Mammary epithelial cell (primary cell): ENCODE measurements at regions of chr19 and their contacts with region 1.

Region 1: DNA sequence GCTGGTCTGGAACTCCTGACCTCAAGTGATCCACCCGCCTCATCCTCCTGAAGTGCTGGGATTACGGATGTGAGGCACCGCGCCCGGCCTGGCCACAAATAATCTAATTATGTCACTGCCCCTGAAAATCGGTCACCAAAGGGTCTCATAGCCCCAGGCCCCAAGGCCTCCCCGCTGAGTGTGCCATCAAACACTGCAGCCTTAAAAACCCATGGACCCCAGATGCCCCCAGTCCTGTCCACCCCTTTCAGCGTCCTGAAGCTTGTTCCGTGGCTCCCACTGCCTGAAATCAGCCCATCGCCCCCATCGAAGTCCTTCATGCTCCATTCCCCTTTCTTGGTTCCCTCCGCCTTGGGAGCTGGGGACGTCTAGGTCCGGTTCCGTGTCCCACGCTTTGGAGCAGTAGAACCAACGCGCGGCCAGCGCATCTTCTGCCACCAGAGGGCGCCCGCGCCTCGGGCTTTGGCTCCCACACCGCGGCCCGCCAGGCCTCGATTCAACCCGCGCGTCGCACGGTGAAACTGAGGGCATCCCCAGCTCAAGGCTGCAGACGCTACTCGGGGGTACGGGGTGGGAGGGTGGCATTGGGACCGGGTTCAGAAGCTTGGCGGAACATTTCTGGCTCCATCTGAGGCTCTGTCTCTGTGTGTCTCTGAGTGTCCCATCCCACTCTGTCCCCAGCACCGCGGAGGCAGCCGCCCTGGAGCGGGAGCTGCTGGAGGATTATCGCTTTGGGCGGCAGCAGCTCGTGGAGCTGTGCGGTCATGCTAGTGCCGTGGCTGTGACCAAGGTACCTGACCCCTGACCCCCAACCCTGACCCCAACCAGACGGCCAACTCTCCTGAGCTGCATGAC is 3.5 kb downstream of the YJEFN3 start:
- DNase-seq: peak; percentile 46
- H3K4me3 ChIP-seq: no peak overlapping the region
- H3K27ac ChIP-seq: no peak overlapping the region
- H3K4me1 ChIP-seq: peaks cover 3% of the 10 kb centered on the region
- H3K27me3 ChIP-seq: no peaks in the 10 kb centered on the region
- CTCF ChIP-seq: peak; percentile 82 to 97

Region 2: GRCh38 chr19:19554074-19555023 is 22.2 kb after region 1 on chr19:
- CTCF ChIA-PET with region 1: interaction called, 13 read pairs
- dilution Hi-C with region 1: no loop called
- in situ Hi-C with region 1: no loop called
- intact Hi-C with region 1: no loop called
- DNase-seq: no peak
- H3K4me3 ChIP-seq: no peak overlapping the region
- H3K27ac ChIP-seq: no peak overlapping the region
- H3K4me1 ChIP-seq: no peaks in the 10 kb centered on the region
- H3K27me3 ChIP-seq: no peaks in the 10 kb centered on the region
- CTCF ChIP-seq: peak; percentile 66 to 79

Region 3: GRCh38 chr19:19568802-19569756 is 36.9 kb after region 1 on chr19:
- CTCF ChIA-PET with region 1: interaction called, 28 read pairs
- dilution Hi-C with region 1: no loop called
- in situ Hi-C with region 1: no loop called
- intact Hi-C with region 1: no loop called
- DNase-seq: peak; percentile 34
- H3K4me3 ChIP-seq: no peak overlapping the region
- H3K27ac ChIP-seq: no peak overlapping the region
- H3K4me1 ChIP-seq: no peaks in the 10 kb centered on the region
- H3K27me3 ChIP-seq: no peaks in the 10 kb centered on the region
- CTCF ChIP-seq: no peak

Region 4: DNA sequence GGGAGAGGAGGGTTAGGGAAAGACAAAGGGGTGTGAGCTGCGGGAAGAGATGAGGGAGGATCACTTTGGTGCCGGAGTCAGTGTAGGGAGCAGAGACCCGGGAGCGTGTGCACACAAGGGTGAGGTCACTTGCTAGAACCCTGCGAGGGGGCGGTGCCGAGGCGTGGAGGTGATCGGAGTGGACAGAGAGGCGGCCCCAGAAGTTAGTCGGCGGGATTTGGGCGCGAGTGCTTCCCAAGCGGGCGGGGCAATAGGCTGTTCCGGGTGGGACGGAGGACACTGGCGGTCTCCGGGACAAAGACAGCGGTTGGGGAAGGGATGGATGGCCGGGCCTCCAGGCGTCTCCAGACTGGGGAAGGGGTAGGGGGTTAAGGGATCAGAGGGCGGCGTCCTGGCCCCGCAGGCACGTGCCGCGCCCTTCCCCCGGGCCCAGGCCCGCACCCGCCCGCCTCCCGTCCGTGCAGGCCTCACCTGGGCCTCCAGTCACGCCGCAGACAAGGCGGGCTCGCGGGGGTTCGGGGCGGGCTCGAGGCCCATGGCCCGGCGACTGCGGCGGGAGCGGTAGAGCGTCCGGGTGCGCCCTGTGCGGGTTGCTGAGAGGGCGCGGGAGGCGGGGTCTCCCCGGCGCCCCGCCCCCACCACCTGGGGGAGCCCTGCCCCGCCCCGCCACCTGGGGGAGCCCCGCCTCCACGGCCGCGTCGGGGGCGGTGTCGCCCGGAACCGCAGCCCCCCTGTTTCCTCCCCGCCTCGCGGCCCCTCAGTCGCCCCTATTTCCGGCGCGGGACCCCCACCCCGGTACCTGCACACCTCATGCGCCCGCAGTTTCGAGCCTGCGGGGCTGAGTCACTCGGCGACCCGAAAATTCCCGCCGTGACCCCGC is 95.7 kb after region 1 on chr19 and contains the start of gene LPAR2:
- CTCF ChIA-PET with region 1: no interaction called
- dilution Hi-C with region 1: loop called (anchors 5 kb)
- in situ Hi-C with region 1: no loop called
- intact Hi-C with region 1: no loop called
- DNase-seq: peak; percentile 53
- H3K4me3 ChIP-seq: peak within 1 kb of the TSS; percentile 58 to 79 (median 68)
- H3K27ac ChIP-seq: peak within 1 kb of the TSS; percentile 20
- H3K4me1 ChIP-seq: peaks cover 14% of the 10 kb centered on the region
- H3K27me3 ChIP-seq: no peaks in the 10 kb centered on the region
- CTCF ChIP-seq: no peak
- total RNA-seq, gene LPAR2: 20.2 to 27.9 TPM

Region 5: GRCh38 chr19:19956434-19957075 is 424.4 kb after region 1 on chr19:
- CTCF ChIA-PET with region 1: no interaction called
- dilution Hi-C with region 1: no loop called
- in situ Hi-C with region 1: loop called in 1 of 2 experiments (anchors 10 kb)
- intact Hi-C with region 1: no loop called
- DNase-seq: no peak
- H3K4me3 ChIP-seq: no peak overlapping the region
- H3K27ac ChIP-seq: no peak overlapping the region
- H3K4me1 ChIP-seq: no peaks in the 10 kb centered on the region
- H3K27me3 ChIP-seq: no peaks in the 10 kb centered on the region
- CTCF ChIP-seq: no peak